ENCODE measurements at regions of chr6 and their contacts with region 1.

Region 1: DNA sequence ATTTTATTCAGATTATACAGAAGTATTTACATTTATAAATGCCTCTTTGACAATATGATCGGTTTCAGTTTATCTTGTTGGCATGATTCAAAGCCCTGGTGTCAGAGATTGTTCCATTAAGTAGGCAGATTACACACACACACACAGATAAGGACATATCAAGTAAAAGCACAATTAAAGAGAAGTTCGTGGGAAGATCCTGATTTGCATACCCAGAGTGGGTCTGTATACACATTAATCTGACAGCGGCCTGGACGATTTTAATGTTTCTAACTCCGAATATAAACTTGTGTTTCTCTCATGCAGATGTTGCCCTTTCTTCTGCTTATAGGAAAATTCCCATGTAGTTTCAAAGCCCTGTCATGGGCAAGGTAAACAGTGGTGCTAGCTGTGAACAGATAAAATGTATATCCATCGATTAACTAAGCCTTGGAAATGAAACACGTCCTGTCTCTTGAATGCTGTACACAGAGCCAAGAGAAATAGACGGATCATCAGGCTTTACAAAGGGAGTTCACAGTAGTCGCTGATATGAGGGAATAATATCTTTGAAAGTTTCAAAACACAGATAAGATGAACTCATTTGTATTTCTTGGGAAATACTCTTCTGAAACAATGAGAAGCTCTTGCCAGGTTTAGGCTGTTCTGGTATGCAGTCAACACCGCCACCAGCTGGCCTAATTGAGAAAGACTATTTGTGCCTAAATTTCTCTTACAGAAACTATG is 108.2 kb upstream of the GMDS start:
- DNase-seq: peak; percentile 14 to 61 (median 28)
- ATAC-seq: no peak
- H3K4me3 ChIP-seq: no peak overlapping the region
- H3K4me3 Mint-ChIP-seq: no peak overlapping the region
- H3K27ac ChIP-seq: no peak overlapping the region
- H3K27ac Mint-ChIP-seq: no peak overlapping the region
- H3K4me1 ChIP-seq: no peaks in the 10 kb centered on the region
- H3K4me1 Mint-ChIP-seq: no peaks in the 10 kb centered on the region
- H3K27me3 ChIP-seq: no peaks in the 10 kb centered on the region
- H3K27me3 Mint-ChIP-seq: no peaks in the 10 kb centered on the region
- CTCF ChIP-seq: peak; percentile 71

Region 2: DNA sequence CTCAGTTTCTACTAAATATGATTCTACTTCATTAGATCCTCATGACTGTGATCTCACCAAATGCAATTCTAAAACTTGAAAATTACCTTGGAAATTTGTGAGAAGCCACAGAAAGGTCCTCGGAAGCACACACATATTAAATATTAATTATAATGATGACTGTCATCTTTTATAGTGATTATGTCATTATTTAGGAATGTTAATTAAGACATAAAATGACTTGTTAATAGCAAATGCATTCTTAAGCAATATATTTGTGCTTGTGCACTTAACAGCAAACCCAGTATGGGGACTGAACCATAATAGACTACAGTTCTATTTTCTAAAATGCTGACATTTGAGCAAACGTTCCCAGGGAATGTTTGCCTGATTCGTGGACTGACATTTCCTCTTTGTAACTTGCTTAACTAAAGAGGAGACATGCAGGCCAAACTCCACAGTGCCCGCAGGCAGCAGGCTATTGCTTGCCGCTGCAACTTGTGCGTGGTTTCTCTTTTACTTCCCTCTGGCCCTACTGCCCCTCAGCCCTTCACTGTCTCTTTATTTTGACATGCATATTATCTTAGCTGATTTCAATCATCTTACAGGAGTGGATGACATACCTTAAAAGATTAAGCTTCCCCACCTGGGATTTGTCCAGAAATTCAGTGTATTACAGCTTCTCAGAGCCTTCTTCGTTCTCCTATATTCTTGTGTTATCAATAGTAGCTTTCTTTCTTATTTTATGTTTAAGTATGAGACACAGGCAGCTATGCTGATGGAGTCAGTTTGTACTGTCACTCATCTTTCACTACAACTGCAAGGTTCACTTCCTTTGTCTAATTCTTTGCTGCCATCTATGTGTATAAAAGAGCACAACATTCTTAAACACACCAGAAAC is 249.7 kb before region 1 on chr6:
- CTCF ChIA-PET with region 1: no interaction called
- POLR2A ChIA-PET with region 1: no interaction called
- intact Hi-C with region 1: loop called in 1 of 2 experiments (anchors 5 kb)
- DNase-seq: peak in 3 of 14 experiments; percentile 44 to 50 (median 45)
- ATAC-seq: peak; percentile 58
- H3K4me3 ChIP-seq: no peak overlapping the region
- H3K4me3 Mint-ChIP-seq: no peak overlapping the region
- H3K27ac ChIP-seq: no peak overlapping the region
- H3K27ac Mint-ChIP-seq: no peak overlapping the region
- H3K4me1 ChIP-seq: no peaks in the 10 kb centered on the region
- H3K4me1 Mint-ChIP-seq: no peaks in the 10 kb centered on the region
- H3K27me3 ChIP-seq: no peaks in the 10 kb centered on the region
- H3K27me3 Mint-ChIP-seq: no peaks in the 10 kb centered on the region
- CTCF ChIP-seq: peak; percentile 63

Region 3: GRCh38 chr6:2196079-2196679 is 157.4 kb before region 1 on chr6:
- CTCF ChIA-PET with region 1: no interaction called
- POLR2A ChIA-PET with region 1: no interaction called
- intact Hi-C with region 1: loop called (anchors 5 to 10 kb)
- DNase-seq: peak in 7 of 14 experiments; percentile 7 to 69 (median 47)
- ATAC-seq: peak; percentile 58
- H3K4me3 ChIP-seq: no peak overlapping the region
- H3K4me3 Mint-ChIP-seq: no peak overlapping the region
- H3K27ac ChIP-seq: no peak overlapping the region
- H3K27ac Mint-ChIP-seq: no peak overlapping the region
- H3K4me1 ChIP-seq: no peaks in the 10 kb centered on the region
- H3K4me1 Mint-ChIP-seq: peaks cover 4% of the 10 kb centered on the region
- H3K27me3 ChIP-seq: no peaks in the 10 kb centered on the region
- H3K27me3 Mint-ChIP-seq: no peaks in the 10 kb centered on the region
- CTCF ChIP-seq: peak; percentile 82

Region 4: GRCh38 chr6:2296781-2297180 is 56.8 kb before region 1 on chr6:
- CTCF ChIA-PET with region 1: no interaction called
- POLR2A ChIA-PET with region 1: no interaction called
- intact Hi-C with region 1: no loop called
- DNase-seq: no peak
- ATAC-seq: no peak
- H3K4me3 ChIP-seq: no peak overlapping the region
- H3K4me3 Mint-ChIP-seq: no peak overlapping the region
- H3K27ac ChIP-seq: no peak overlapping the region
- H3K27ac Mint-ChIP-seq: no peak overlapping the region
- H3K4me1 ChIP-seq: no peaks in the 10 kb centered on the region
- H3K4me1 Mint-ChIP-seq: no peaks in the 10 kb centered on the region
- H3K27me3 ChIP-seq: no peaks in the 10 kb centered on the region
- H3K27me3 Mint-ChIP-seq: no peaks in the 10 kb centered on the region
- CTCF ChIP-seq: no peak

Region 5: DNA sequence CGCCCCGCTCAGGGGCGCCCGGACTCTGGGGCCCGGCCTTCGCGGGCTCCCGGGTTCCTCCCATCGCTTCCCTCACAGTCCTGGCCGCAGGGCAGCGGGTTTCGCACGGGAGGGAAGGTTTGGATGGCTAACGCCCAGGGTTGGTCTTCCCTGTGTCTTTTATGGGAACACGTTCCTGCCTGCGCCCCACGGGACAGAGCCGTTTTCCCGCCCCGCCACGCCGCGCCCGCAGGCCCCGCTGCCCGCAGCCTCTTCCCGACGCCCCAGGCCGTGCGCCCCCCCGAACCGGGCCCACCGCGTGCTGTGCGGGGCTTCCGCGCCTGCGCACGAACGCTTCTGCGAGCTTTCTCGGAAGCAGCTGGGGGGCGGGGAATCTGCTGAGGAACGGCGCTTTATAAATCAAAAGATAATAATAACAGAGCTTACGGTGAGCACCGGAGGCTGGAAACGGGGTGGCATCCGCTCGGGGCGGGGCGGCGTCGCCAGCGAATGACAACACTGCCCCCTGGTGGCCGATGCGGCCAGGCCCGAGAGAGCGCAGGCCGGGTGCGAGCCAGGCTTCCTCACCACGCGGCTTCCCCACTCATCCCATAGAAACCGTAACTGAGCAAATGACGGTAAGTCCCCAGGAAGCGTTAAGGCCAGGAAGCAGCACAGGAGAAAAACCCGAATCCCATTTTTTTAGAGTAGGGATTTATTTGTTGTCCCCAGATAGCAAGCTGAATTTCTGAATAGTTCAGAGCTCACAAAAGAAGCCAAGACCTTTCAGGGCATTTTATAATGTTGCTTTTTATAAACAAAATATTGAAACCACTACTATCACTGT is 280.8 kb after region 1 on chr6:
- CTCF ChIA-PET with region 1: no interaction called
- POLR2A ChIA-PET with region 1: no interaction called
- intact Hi-C with region 1: loop called in 1 of 2 experiments (anchors 2 kb)
- DNase-seq: peak; percentile 68 to 90 (median 80)
- ATAC-seq: peak; percentile 94
- H3K4me3 ChIP-seq: peak overlapping the region; percentile 44
- H3K4me3 Mint-ChIP-seq: peak overlapping the region; percentile 84
- H3K27ac ChIP-seq: no peak overlapping the region
- H3K27ac Mint-ChIP-seq: no peak overlapping the region
- H3K4me1 ChIP-seq: peaks cover 9% of the 10 kb centered on the region
- H3K4me1 Mint-ChIP-seq: no peaks in the 10 kb centered on the region
- H3K27me3 ChIP-seq: peaks cover 0 to 5% of the 10 kb centered on the region in 2 experiments
- H3K27me3 Mint-ChIP-seq: peaks cover 22% of the 10 kb centered on the region
- CTCF ChIP-seq: peak; percentile 97